GM12878 (cell line): ENCODE measurements at regions of chr6 and their contacts with region 1.

Region 1: DNA sequence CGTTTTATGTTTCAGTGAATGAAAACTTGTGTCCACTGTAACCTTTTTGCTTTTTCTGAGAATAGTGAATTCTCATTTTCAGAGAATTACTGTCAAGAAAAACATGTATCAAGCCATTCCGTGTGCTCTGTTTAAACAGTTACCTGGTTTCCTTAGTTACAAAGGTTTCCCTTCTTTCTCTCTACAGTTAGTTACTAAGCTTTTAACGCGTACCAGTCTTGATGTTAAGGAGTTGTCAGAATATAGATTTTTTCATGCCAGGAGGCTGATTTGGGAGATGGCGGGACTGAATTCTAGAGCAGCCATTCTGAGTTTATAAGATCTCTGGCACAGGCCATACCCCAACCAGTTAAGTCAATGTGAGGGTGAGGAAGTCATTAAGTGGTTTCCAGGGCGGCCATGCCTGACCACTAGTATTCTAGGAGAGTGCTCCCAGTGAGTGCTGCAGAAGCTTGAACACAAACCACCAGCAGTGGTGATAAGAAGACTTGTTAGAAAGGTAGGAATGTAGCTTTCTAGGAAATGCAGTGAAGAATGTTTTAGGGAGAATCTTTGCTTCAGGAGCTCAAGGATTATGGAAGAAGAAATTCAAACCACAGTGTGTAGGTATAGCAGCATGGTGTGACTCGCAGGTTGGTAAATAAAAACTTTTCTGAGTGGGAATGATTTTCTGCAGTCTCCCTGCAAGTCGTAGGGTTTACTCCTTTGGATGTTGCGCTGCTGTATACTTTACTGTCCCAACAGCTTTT is 112.9 kb downstream of the JARID2 start:
- DNase-seq: peak; percentile 75
- ATAC-seq: peak; percentile 80
- H3K4me3 ChIP-seq: peak overlapping the region; percentile 27
- H3K27ac ChIP-seq: peak overlapping the region; percentile 81
- H3K4me1 ChIP-seq: peaks cover 75% of the 10 kb centered on the region
- H3K27me3 ChIP-seq: no peaks in the 10 kb centered on the region
- CTCF ChIP-seq: no peak
- EP300 ChIP-seq: no peak; a peak in 1 of 4 replicates
- POLR2A ChIP-seq: no peak
- RAD21 ChIP-seq: no peak

Region 2: GRCh38 chr6:15369838-15370237 is 11.1 kb after region 1 on chr6:
- CTCF ChIA-PET with region 1: interaction called, 3 read pairs
- POLR2A ChIA-PET with region 1: interaction called, 9 read pairs
- RAD21 ChIA-PET with region 1: no interaction called
- SMC1A ChIA-PET with region 1: interaction called, 14 read pairs
- in situ Hi-C with region 1: no loop called
- intact Hi-C with region 1: no loop called
- DNase-seq: no peak
- ATAC-seq: peak; percentile 24; the same call in 2 of the 3 replicates
- H3K4me3 ChIP-seq: no peak overlapping the region
- H3K27ac ChIP-seq: peak overlapping the region; percentile 26; the same call in 1 of the 2 replicates
- H3K4me1 ChIP-seq: peaks cover 12% of the 10 kb centered on the region
- H3K27me3 ChIP-seq: no peaks in the 10 kb centered on the region
- CTCF ChIP-seq: no peak
- EP300 ChIP-seq: no peak
- POLR2A ChIP-seq: no peak
- RAD21 ChIP-seq: no peak

Region 3: GRCh38 chr6:15451738-15452137 is 93.0 kb after region 1 on chr6:
- CTCF ChIA-PET with region 1: no interaction called
- POLR2A ChIA-PET with region 1: no interaction called
- RAD21 ChIA-PET with region 1: no interaction called
- SMC1A ChIA-PET with region 1: no interaction called
- in situ Hi-C with region 1: no loop called
- intact Hi-C with region 1: no loop called
- DNase-seq: no peak
- ATAC-seq: no peak
- H3K4me3 ChIP-seq: no peak overlapping the region
- H3K27ac ChIP-seq: peak overlapping the region; percentile 30; the same call in 1 of the 2 replicates
- H3K4me1 ChIP-seq: peaks cover 18% of the 10 kb centered on the region
- H3K27me3 ChIP-seq: no peaks in the 10 kb centered on the region
- CTCF ChIP-seq: no peak
- EP300 ChIP-seq: no peak
- POLR2A ChIP-seq: no peak
- RAD21 ChIP-seq: no peak